Spleen (tissue), 13 donors: ENCODE measurements at regions of chr6 and their contacts with region 1.

Region 1: GRCh38 chr6:8888468-8888867 is 453.1 kb upstream of the SLC35B3 start:
- DNase-seq: no peak
- H3K4me3 ChIP-seq: no peak overlapping the region
- H3K27ac ChIP-seq: no peak overlapping the region
- H3K4me1 ChIP-seq: no peaks in the 10 kb centered on the region
- H3K27me3 ChIP-seq: no peaks in the 10 kb centered on the region
- CTCF ChIP-seq: peak in 5 of 11 experiments; percentile 12 to 38 (median 33)
- POLR2A ChIP-seq: no peak

Region 2: GRCh38 chr6:8686077-8686476 is 202.4 kb before region 1 on chr6:
- intact Hi-C with region 1: loop called (anchors 10 kb)
- DNase-seq: no peak
- H3K4me3 ChIP-seq: no peak overlapping the region
- H3K27ac ChIP-seq: no peak overlapping the region
- H3K4me1 ChIP-seq: no peaks in the 10 kb centered on the region
- H3K27me3 ChIP-seq: no peaks in the 10 kb centered on the region
- CTCF ChIP-seq: no peak
- POLR2A ChIP-seq: no peak